Left cardiac atrium (tissue), 4 donors: ENCODE measurements at regions of chr1 and their contacts with region 1.

Region 1: GRCh38 chr1:100351095-100351891 is 1.0 kb upstream of the CDC14A start:
- DNase-seq: peak; percentile 89
- ATAC-seq: peak; percentile 78 to 90

Region 2: GRCh38 chr1:100249537-100250257 is 101.6 kb before region 1 on chr1 and contains the start of gene DBT:
- intact Hi-C with region 1: loop called in 1 of 2 experiments (anchors 10 kb)
- DNase-seq: peak; percentile 95
- ATAC-seq: peak; percentile 100
- total RNA-seq, gene DBT: 16.7 to 22.4 TPM

Region 3: DNA sequence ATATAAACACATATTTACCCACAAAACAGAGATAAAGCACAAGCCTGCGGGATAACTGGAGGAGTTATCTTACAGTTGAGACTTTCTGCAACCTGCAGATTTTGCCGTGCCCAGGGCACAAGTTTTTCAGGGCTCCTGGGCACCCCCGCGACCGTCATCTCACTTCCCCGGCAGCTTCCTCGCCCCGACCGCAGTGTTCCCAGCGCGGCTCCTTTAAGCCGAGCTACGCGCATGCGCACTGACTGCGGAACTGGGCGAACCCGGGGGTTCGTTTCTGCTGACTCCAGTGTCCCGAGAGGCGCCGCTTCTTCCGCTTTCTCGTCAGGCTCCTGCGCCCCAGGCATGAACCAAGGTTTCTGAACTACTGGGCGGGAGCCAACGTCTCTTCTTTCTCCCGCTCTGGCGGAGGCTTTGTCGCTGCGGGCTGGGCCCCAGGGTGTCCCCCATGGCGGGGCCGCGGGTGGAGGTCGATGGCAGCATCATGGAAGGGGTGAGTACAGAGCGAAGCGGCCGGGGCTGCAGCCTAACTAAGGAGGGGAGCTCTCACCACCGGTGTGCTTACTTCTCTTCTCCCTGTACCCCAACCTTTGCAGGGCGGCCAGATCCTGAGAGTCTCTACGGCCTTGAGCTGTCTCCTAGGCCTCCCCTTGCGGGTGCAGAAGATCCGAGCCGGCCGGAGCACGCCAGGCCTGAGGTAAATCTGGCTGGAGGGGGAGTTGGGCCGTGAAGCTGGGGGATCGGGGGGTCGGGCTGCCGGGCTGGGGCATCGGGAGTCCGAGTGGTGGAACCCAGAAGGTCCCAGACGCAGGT is 85.2 kb before region 1 on chr1 and contains the start of gene RTCA:
- intact Hi-C with region 1: loop called in 1 of 2 experiments (anchors 5 kb)
- DNase-seq: peak; percentile 98
- ATAC-seq: peak; percentile 99 to 100
- total RNA-seq, gene RTCA: 30.3 to 31.8 TPM